IMR-90 (cell line): ENCODE measurements at regions of chr2 and their contacts with region 1.

Region 1: GRCh38 chr2:144849612-144850011 is 329.7 kb upstream of the ZEB2 start:
- DNase-seq: no peak
- ATAC-seq: no peak
- H3K4me3 ChIP-seq: no peak overlapping the region
- H3K27ac ChIP-seq: no peak overlapping the region
- H3K4me1 ChIP-seq: no peaks in the 10 kb centered on the region
- H3K27me3 ChIP-seq: no peaks in the 10 kb centered on the region
- CTCF ChIP-seq: no peak
- POLR2A ChIP-seq: no peak
- RAD21 ChIP-seq: no peak

Region 2: DNA sequence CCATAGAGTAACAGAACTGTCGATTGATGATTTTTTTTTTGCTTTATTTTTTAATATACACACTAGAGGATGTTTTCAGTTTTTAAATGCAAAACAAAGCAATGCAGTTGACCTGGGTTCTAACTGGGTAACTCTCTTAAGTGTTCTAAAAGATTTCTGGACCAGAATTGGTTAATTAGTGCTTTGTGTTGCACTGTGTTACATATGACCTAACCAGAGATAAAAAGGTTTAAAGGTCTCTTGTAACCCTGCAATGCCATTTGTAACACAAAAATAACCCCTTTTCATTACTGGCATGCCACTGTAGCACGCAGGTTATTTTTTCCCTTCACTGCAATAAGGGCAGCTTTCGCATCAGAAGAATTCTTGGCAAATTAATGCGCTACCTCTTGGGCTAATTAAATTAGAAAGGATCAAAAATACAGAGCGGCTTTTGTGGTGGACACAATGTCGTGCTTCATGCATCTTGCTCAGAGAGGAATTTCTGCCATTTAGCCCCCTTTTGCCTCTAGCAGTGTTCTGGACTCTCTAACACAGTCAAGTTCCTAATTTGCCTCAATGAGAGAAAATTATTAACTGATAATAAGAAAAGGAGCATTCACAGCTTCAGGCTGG is 78.9 kb before region 1 on chr2:
- CTCF ChIA-PET with region 1: no interaction called
- POLR2A ChIA-PET with region 1: interaction called, 10 read pairs
- dilution Hi-C with region 1: no loop called
- in situ Hi-C with region 1: no loop called
- intact Hi-C with region 1: no loop called
- DNase-seq: no peak
- ATAC-seq: no peak
- H3K4me3 ChIP-seq: no peak overlapping the region
- H3K27ac ChIP-seq: no peak overlapping the region
- H3K4me1 ChIP-seq: no peaks in the 10 kb centered on the region
- H3K27me3 ChIP-seq: no peaks in the 10 kb centered on the region
- CTCF ChIP-seq: no peak
- POLR2A ChIP-seq: no peak
- RAD21 ChIP-seq: no peak

Region 3: DNA sequence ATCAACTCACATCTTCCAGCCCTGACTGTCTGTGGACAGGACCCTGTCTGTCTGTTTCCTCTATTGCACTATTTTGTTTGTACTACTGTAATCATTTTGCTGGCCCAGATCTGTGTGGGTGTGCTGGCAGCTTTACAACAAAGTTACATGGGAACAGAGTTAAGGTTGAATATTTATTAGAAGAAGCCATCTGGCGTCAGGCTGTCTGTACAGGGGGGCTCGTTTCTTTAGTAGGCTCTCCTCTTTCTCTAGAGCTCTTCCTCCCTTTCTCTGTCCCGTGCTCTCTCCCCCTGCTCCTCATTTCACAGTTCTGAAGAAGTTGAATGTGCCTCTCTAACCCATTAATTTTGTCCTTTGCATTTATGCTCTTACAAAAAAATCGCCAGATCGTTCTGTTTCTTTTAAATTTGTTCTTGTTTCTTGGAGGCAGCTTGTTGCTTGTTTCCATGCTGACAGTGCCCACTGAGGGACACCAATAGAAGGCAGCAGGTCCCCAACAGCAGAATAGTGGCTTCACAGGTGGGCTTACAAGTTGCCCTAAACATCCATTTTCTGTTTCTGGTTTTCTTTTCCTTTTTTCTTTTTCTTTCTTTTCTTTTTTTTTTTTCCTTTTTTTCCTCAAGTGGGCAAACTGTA is 14.5 kb before region 1 on chr2:
- CTCF ChIA-PET with region 1: interaction called, 3 read pairs
- POLR2A ChIA-PET with region 1: interaction called, 11 read pairs
- dilution Hi-C with region 1: no loop called
- in situ Hi-C with region 1: no loop called
- intact Hi-C with region 1: no loop called
- DNase-seq: peak; percentile 88
- ATAC-seq: peak; percentile 79
- H3K4me3 ChIP-seq: peak overlapping the region; percentile 6; the same call in 1 of the 2 replicates
- H3K27ac ChIP-seq: peak overlapping the region; percentile 61
- H3K4me1 ChIP-seq: peaks cover 12% of the 10 kb centered on the region
- H3K27me3 ChIP-seq: no peaks in the 10 kb centered on the region
- CTCF ChIP-seq: no peak
- POLR2A ChIP-seq: no peak
- RAD21 ChIP-seq: peak; percentile 1; the same call in 1 of the 2 replicates